ENCODE measurements at regions of chr15 and their contacts with region 1.

Region 1: DNA sequence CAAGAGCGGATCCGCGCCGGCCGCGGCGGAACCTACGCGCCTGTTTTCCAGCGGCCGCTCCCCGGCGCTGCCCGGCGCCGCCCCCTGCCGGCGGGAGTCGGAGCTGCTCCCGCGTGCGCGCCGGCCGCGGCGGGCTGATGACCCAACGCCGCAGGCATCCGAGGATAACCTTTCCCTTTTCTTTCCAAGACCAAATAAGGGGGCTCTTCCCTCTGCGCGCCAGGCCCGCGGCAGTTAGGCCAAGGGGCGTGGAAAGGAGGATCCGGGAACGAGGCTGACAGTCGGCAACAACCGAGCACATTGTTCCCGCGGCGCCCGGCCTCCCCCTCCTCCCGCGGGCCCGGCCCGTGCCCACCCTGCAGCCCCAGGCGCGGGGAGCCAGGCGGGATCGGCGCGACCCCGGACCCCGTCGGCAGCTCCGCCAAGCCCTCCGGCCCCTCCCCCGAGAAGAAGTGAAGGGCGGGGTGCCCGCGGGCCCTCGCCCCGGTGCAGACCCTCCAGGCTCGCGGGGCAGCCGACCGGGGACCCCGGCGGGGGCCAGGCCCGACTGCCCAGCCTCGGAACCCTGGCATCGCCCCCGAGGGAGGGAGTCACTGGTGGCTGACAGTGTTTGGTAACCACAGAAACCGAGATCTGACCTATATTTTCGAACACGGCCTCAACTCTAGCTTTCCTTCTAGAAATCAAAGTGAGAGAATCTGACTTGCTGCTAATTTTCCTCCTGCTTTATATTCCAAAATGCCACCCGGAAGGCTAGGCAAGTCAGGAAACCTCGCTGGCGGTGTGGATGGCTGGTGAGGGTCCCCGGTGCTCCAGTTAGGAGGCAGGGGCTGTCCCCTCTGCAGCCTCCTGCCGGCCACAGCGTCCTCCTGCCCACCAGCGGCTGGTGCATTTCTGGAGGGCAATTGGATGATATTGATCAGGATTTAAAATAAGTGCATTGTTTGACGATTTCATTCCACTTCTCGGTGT is 45.6 kb upstream of the SYNM start:
- DNase-seq: peak; percentile 48 to 70
- ATAC-seq: peak; percentile 55 to 66
- H3K4me3 ChIP-seq: peak overlapping the region; percentile 48 to 73 (median 51)
- H3K27ac ChIP-seq: peak overlapping the region; percentile 72 to 91 (median 82)
- H3K4me1 ChIP-seq: peaks cover 22 to 24% of the 10 kb centered on the region in 2 donors
- H3K27me3 ChIP-seq: no peaks in the 10 kb centered on the region
- CTCF ChIP-seq: peak in 4 of 5 experiments; percentile 74 to 94 (median 92)
- POLR2A ChIP-seq: peak in 1 of 2 donors; percentile 11

Region 2: GRCh38 chr15:98647774-98648653 is 411.3 kb before region 1 on chr15 and contains the start of gene IGF1R:
- in situ Hi-C with region 1: loop called (anchors 25 kb)
- intact Hi-C with region 1: loop called (anchors 2 kb)
- DNase-seq: peak; percentile 62 to 72
- ATAC-seq: peak; percentile 83 to 84
- H3K4me3 ChIP-seq: peak within 1 kb of the TSS; percentile 80 to 97 (median 88)
- H3K27ac ChIP-seq: peak within 1 kb of the TSS; percentile 86 to 92 (median 90)
- H3K4me1 ChIP-seq: peaks cover 0 to 7% of the 10 kb centered on the region in 2 donors
- H3K27me3 ChIP-seq: peaks cover 12 to 34% (median 28%) of the 10 kb centered on the region in 3 donors
- CTCF ChIP-seq: peak in 4 of 5 experiments; percentile 17 to 49 (median 25)
- POLR2A ChIP-seq: peak; percentile 70 to 85
- total RNA-seq, gene IGF1R: 10.1 to 50.4 (median 12.3) TPM

Region 3: GRCh38 chr15:98779463-98780071 is 279.7 kb before region 1 on chr15:
- in situ Hi-C with region 1: loop called in 1 of 4 experiments (anchors 10 kb)
- intact Hi-C with region 1: loop called (anchors 2 kb)
- DNase-seq: peak; percentile 60 to 73
- ATAC-seq: peak; percentile 97 to 99
- H3K4me3 ChIP-seq: peak overlapping the region in 1 of 4 donors; percentile 27
- H3K27ac ChIP-seq: no peak overlapping the region
- H3K4me1 ChIP-seq: peaks cover 8 to 11% of the 10 kb centered on the region in 2 donors
- H3K27me3 ChIP-seq: no peaks in the 10 kb centered on the region
- CTCF ChIP-seq: peak; percentile 77 to 96 (median 87)
- POLR2A ChIP-seq: no peak

Region 4: DNA sequence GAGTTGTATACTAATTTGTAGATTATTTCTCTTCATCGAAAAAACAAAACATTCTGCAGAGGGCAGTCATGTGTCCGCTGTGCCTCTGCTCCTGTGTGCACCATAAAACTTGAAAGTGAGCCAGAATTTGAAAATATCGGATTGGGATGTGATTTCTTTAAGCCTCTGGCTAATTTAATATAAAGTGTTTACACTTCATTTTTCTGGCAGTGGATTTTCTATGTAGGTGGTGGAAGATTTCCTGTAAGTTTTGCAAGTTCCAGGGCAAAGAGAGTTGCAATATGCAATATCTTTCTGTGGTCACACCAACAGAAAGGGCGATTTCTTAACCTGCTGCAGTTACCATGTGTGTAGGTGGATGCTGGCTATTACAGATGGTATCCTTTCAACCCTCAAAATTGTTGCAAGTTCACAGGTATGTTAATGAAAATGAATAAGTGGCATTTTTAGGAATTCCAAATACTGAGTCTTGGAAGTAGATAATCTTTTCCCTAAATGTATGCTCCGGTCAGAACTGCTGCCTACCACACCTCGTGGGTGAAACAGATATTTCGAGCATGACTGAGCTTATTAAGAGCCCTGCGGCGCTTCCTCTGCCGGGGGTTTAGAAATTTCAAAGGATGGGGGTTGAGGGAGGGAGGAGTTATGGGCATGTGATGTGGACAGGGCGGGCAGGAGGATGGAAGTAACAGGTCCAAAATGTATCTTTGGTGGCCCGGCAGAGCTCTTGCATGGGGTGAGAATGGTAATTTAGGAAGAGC is 185.7 kb before region 1 on chr15:
- in situ Hi-C with region 1: no loop called
- intact Hi-C with region 1: loop called (anchors 5 kb)
- DNase-seq: no peak
- ATAC-seq: no peak
- H3K4me3 ChIP-seq: no peak overlapping the region
- H3K27ac ChIP-seq: no peak overlapping the region
- H3K4me1 ChIP-seq: peaks cover 17 to 58% of the 10 kb centered on the region in 2 donors
- H3K27me3 ChIP-seq: no peaks in the 10 kb centered on the region
- CTCF ChIP-seq: no peak
- POLR2A ChIP-seq: no peak

Region 5: DNA sequence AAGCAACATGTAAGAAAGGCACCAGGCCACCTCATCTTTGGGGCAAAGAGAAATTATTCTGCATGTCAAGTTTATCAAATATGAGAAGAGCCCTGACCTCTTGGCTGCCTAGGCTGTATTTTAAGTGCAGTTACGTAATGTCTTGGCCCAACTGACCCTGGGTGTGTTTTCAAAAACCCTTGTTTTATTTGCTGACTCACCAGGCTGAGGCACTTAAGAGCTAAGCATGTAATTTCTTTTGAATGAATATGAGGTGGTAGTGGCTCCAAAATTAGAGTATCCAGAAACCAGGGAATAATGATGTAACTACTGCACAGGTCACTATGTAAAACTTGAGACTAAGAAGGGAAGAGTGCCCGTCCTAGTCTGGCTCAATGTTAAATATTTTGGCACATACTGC is 76.0 kb before region 1 on chr15:
- in situ Hi-C with region 1: no loop called
- intact Hi-C with region 1: loop called (anchors 2 kb)
- DNase-seq: peak; percentile 72 to 73
- ATAC-seq: peak; percentile 82 to 89
- H3K4me3 ChIP-seq: no peak overlapping the region
- H3K27ac ChIP-seq: peak overlapping the region; percentile 78 to 85 (median 82)
- H3K4me1 ChIP-seq: peaks cover 27 to 32% of the 10 kb centered on the region in 2 donors
- H3K27me3 ChIP-seq: no peaks in the 10 kb centered on the region
- CTCF ChIP-seq: no peak
- POLR2A ChIP-seq: no peak

Measured in gastrocnemius medialis (tissue), 4 donors.